ENCODE measurements at regions of chr3 and their contacts with region 1.

Region 1: GRCh38 chr3:129195731-129196256 is 12.1 kb upstream of the CNBP start:
- DNase-seq: peak; percentile 79 to 86
- ATAC-seq: peak; percentile 93 to 95
- H3K4me3 ChIP-seq: peak overlapping the region in 2 of 4 donors; percentile 6 to 26
- H3K27ac ChIP-seq: peak overlapping the region; percentile 86 to 90 (median 88)
- H3K4me1 ChIP-seq: peaks cover 35 to 62% of the 10 kb centered on the region in 2 donors
- H3K27me3 ChIP-seq: no peaks in the 10 kb centered on the region
- CTCF ChIP-seq: peak in 1 of 5 experiments; percentile 1
- POLR2A ChIP-seq: no peak

Region 2: GRCh38 chr3:128650096-128651050 is 545.4 kb before region 1 on chr3 and contains the start of gene RPN1:
- in situ Hi-C with region 1: no loop called
- intact Hi-C with region 1: no loop called
- DNase-seq: peak; percentile 97 to 98
- ATAC-seq: peak; percentile 96
- H3K4me3 ChIP-seq: peak within 1 kb of the TSS; percentile 90 to 100 (median 95)
- H3K27ac ChIP-seq: peak within 1 kb of the TSS; percentile 97 to 100 (median 100)
- H3K4me1 ChIP-seq: peaks cover 16 to 17% of the 10 kb centered on the region in 2 donors
- H3K27me3 ChIP-seq: no peaks in the 10 kb centered on the region
- CTCF ChIP-seq: no peak
- POLR2A ChIP-seq: peak; percentile 77 to 87
- total RNA-seq, gene RPN1: 197 to 219 (median 212) TPM

Region 3: GRCh38 chr3:129211772-129212171 is 16.0 kb after region 1 on chr3:
- in situ Hi-C with region 1: no loop called
- intact Hi-C with region 1: loop called (anchors 2 kb)
- DNase-seq: peak; percentile 86 to 95
- ATAC-seq: peak; percentile 99
- H3K4me3 ChIP-seq: peak overlapping the region in 2 of 4 donors; percentile 16 to 17
- H3K27ac ChIP-seq: peak overlapping the region; percentile 47 to 82 (median 75)
- H3K4me1 ChIP-seq: peaks cover 14 to 21% of the 10 kb centered on the region in 2 donors
- H3K27me3 ChIP-seq: no peaks in the 10 kb centered on the region
- CTCF ChIP-seq: no peak
- POLR2A ChIP-seq: no peak